MCF 10A (cell line): ENCODE measurements at regions of chr2 and their contacts with region 1.

Region 1: GRCh38 chr2:18719978-18720775 is 130.8 kb upstream of the NT5C1B start:
- DNase-seq: peak; percentile 91
- H3K4me3 Mint-ChIP-seq: no peak overlapping the region
- H3K27ac Mint-ChIP-seq: no peak overlapping the region
- H3K4me1 Mint-ChIP-seq: peaks cover 18% of the 10 kb centered on the region
- H3K27me3 Mint-ChIP-seq: no peaks in the 10 kb centered on the region
- CTCF ChIP-seq: no peak

Region 2: DNA sequence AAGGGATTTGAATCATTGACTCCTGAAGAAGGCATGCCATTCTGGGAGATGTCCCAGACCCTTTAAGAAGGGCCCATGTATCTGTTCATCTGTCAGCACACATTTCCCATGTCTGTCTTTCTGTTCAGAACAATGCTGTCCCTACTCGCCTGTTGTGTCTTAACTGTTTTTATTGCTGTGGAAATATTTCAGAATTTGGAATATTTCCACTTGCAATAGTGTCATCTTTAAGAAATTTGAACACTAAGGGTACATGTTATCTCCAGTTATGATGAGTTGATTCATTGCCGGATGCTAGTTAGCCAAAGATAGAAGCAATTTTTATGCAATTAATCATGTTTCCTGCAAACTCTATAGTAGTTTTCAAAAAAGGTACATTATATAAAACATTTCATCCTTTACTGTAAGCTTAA is 93.9 kb before region 1 on chr2:
- CTCF ChIA-PET with region 1: interaction called, 3 read pairs
- POLR2A ChIA-PET with region 1: no interaction called
- intact Hi-C with region 1: loop called (anchors 10 kb)
- DNase-seq: peak; percentile 47
- H3K4me3 Mint-ChIP-seq: no peak overlapping the region
- H3K27ac Mint-ChIP-seq: peak overlapping the region; percentile 22
- H3K4me1 Mint-ChIP-seq: peaks cover 26% of the 10 kb centered on the region
- H3K27me3 Mint-ChIP-seq: no peaks in the 10 kb centered on the region
- CTCF ChIP-seq: no peak